Sigmoid colon (tissue), 7 donors: ENCODE measurements at regions of chr9 and their contacts with region 1.

Region 1: DNA sequence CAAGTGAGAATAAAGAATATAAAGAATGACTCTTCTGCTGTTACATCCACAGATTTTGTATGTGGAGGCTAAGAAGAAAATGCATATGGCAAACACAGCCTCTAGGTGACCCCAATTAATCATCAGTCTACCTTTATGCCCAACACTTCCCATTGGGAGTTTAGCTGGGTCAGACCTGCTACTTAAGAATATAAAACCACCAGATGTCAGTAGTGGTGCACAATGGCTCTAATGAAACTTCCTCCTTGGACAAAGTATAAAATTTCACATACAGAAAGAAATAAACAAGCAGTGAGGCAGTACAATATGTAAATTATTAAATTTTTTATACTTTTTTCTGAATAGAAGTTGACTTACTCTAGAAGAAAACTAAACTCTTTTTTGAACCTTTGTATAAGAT is 539.9 kb downstream of the BRINP1 start:
- DNase-seq: no peak
- H3K4me3 ChIP-seq: no peak overlapping the region
- H3K27ac ChIP-seq: no peak overlapping the region
- H3K4me1 ChIP-seq: no peaks in the 10 kb centered on the region
- H3K27me3 ChIP-seq: no peaks in the 10 kb centered on the region
- CTCF ChIP-seq: peak in 2 of 4 experiments; percentile 14 to 31
- EP300 ChIP-seq: no peak
- POLR2A ChIP-seq: no peak

Region 2: GRCh38 chr9:117747386-117747970 is 1081.9 kb before region 1 on chr9:
- intact Hi-C with region 1: no loop called
- DNase-seq: no peak
- H3K4me3 ChIP-seq: no peak overlapping the region
- H3K27ac ChIP-seq: no peak overlapping the region
- H3K4me1 ChIP-seq: peaks cover 0 to 5% (median 0%) of the 10 kb centered on the region in 4 donors
- H3K27me3 ChIP-seq: peaks cover 0 to 17% (median 5%) of the 10 kb centered on the region in 3 donors
- CTCF ChIP-seq: no peak
- EP300 ChIP-seq: no peak
- POLR2A ChIP-seq: no peak

Region 3: DNA sequence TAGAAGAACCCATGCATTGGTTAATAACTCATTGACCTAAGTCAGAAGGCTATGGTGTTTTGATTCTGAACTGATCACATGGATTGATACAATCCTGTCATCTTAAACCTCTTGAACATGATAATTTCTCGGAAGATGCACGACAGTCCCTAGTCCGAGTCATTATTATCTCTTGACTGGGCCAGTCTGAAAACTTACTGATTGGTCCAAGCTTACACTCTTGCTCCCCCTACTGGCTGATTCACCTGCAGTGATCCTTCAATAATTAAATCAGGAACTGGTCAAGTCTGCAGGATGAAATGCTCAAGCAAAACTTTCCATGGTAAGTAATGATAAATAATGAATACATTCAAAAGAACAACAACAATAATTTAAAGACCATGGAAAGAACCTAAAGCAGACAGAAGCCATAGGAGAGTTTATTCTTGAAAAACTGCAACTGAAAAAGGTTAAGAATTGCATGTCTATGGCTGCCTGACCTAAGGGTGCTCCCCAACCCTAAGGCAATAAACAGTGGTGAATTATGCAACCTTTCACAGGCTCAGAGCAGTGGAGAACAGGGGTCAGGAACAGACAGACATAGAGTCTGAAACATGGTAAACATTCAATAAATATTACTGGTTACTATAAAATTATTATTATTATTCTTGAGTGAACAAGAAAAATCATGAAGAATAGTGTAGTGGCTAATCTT is 460.6 kb after region 1 on chr9:
- intact Hi-C with region 1: loop called (anchors 2 kb)
- DNase-seq: no peak
- H3K4me3 ChIP-seq: no peak overlapping the region
- H3K27ac ChIP-seq: no peak overlapping the region
- H3K4me1 ChIP-seq: peaks cover 0 to 4% (median under 1%) of the 10 kb centered on the region in 4 donors
- H3K27me3 ChIP-seq: no peaks in the 10 kb centered on the region
- CTCF ChIP-seq: peak; percentile 55 to 84 (median 76)
- EP300 ChIP-seq: no peak
- POLR2A ChIP-seq: no peak